ENCODE measurements at regions of chr3 and their contacts with region 1.

Region 1: DNA sequence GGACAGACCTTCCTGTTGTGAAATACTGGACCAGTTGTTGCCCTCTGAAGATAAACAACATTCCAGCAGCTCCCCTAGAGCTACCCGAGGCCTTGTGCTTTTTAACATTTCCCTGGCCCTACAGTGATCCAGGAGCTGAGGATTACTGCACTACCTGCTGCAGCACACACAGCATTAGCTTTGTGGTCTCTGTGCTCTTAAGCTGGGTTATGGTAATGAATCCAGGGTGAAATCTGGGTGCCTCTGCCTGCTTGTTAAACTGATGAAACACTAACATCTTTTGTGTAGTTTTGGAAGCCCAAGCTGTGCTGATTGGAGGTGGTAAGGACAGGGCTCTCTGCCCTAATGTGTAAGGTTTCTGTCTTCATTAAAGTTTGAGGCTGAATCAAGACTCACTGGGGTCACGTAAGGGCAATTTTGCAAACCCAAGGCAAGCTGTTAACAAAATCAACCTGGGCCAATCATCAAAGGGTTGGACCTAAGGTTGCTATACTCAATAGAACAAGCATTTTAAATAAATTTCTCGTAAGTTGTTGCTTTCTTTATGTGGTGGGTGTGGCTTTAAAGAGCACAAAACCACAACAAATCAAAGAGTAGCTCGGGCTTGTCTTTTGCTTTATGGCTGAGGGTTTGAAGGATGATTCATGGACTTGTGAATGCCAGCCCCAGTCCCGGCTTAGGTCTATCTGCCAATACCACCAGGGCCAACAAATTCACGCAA is 183.9 kb downstream of the TPRG1 start:
- DNase-seq: no peak
- H3K4me3 ChIP-seq: no peak overlapping the region
- H3K27ac ChIP-seq: no peak overlapping the region
- H3K4me1 ChIP-seq: no peaks in the 10 kb centered on the region
- CTCF ChIP-seq: no peak

Region 2: GRCh38 chr3:189344996-189345395 is 10.6 kb before region 1 on chr3:
- CTCF ChIA-PET with region 1: no interaction called
- POLR2A ChIA-PET with region 1: interaction called, 11 read pairs
- intact Hi-C with region 1: no loop called
- DNase-seq: no peak
- H3K4me3 ChIP-seq: no peak overlapping the region
- H3K27ac ChIP-seq: no peak overlapping the region
- H3K4me1 ChIP-seq: no peaks in the 10 kb centered on the region
- CTCF ChIP-seq: no peak

Measured in OCI-LY7 (cell line).